ENCODE measurements at regions of chr6 and their contacts with region 1.

Region 1: DNA sequence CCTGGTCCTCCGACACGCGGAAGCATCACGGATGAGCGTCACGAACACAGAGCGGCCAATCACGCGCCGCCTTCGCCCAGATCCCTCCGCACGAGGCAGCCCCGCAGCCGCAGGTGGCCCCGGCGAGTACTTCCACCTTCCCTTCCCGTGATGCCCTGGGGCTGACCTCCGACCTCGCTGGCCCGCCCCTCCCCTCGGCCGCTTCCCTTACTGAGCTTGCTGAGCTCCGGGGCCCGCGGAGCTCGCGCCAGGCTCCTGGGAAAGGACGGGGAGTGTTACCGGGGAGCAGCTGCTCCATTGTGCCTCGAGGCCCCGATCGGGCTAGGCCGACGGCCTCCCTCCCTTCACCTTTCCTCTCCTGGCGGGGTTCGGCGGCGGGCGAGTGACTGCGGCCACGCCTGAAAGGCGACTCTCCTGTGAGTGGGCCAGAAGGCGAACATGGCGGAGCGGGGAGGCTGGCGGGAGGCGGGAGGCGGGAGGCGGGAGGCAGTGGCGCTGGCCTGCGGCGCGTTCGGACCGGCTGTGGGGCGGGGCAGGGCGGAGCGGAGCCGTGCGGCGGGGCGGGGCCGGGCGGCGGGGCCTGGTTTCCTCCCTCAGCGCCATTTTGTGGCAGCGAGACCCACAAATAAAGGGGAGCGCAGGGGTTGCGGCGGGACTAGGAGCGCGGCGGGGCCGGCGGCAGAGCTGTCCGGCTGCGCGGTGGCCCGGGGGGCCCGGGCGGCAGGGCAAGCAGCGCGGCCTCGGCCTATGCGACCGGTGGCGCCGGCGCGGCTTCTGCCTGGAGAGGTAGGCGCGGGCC is at the start of gene WTAP:
- DNase-seq: peak; percentile 97
- H3K4me3 Mint-ChIP-seq: peak within 1 kb of the TSS; percentile 96
- H3K27ac Mint-ChIP-seq: peak within 1 kb of the TSS; percentile 96
- H3K4me1 Mint-ChIP-seq: peaks cover 61% of the 10 kb centered on the region
- H3K27me3 Mint-ChIP-seq: no peaks in the 10 kb centered on the region
- total RNA-seq, gene WTAP: 124 TPM

Region 2: GRCh38 chr6:159693128-159693893 is 33.8 kb before region 1 on chr6 and contains the start of gene SOD2:
- CTCF ChIA-PET with region 1: interaction called, 20 read pairs
- POLR2A ChIA-PET with region 1: interaction called, 186 read pairs
- DNase-seq: peak; percentile 85
- H3K4me3 Mint-ChIP-seq: peak within 1 kb of the TSS; percentile 97
- H3K27ac Mint-ChIP-seq: peak within 1 kb of the TSS; percentile 97
- H3K4me1 Mint-ChIP-seq: peaks cover 52% of the 10 kb centered on the region
- H3K27me3 Mint-ChIP-seq: no peaks in the 10 kb centered on the region
- total RNA-seq, gene SOD2: 76.5 to 84.8 TPM

Region 3: GRCh38 chr6:159739341-159739740 is 12.2 kb after region 1 on chr6:
- CTCF ChIA-PET with region 1: interaction called, 3 read pairs
- POLR2A ChIA-PET with region 1: interaction called, 24 read pairs
- DNase-seq: no peak
- H3K4me3 Mint-ChIP-seq: no peak overlapping the region
- H3K27ac Mint-ChIP-seq: no peak overlapping the region
- H3K4me1 Mint-ChIP-seq: peaks cover 17% of the 10 kb centered on the region
- H3K27me3 Mint-ChIP-seq: no peaks in the 10 kb centered on the region

Region 4: GRCh38 chr6:159761873-159762680 is 35.0 kb after region 1 on chr6 and contains the start of gene ACAT2:
- CTCF ChIA-PET with region 1: interaction called, 8 read pairs
- POLR2A ChIA-PET with region 1: interaction called, 91 read pairs
- DNase-seq: peak; percentile 95
- H3K4me3 Mint-ChIP-seq: peak within 1 kb of the TSS; percentile 84
- H3K27ac Mint-ChIP-seq: peak within 1 kb of the TSS; percentile 96
- H3K4me1 Mint-ChIP-seq: peaks cover 44% of the 10 kb centered on the region
- H3K27me3 Mint-ChIP-seq: no peaks in the 10 kb centered on the region
- total RNA-seq, gene ACAT2: 98.0 to 109 TPM

Region 5: GRCh38 chr6:159979136-159979874 is 252.2 kb after region 1 on chr6:
- CTCF ChIA-PET with region 1: interaction called, 3 read pairs
- POLR2A ChIA-PET with region 1: interaction called, 11 read pairs
- DNase-seq: peak; percentile 74
- H3K4me3 Mint-ChIP-seq: peak overlapping the region; percentile 69
- H3K27ac Mint-ChIP-seq: peak overlapping the region; percentile 95
- H3K4me1 Mint-ChIP-seq: peaks cover 95% of the 10 kb centered on the region
- H3K27me3 Mint-ChIP-seq: no peaks in the 10 kb centered on the region

Region 6: DNA sequence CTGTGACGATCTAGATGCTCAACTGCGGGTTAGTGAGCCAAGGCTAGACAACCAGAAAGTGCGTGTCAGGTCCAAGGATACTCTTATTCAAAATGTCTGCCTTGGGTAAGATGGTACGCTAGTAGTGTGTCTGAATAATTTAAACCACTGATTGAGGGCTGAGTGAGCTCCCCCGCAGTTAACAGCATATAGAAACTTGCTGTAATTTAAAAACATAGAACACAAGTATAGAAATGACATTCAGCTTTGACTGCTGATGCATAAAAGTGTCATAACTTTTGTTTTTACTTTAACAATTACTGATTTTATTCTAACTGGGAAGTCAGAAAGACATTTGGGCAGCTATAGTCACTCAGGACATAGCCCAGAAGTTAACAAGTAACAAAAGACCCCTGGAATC is 348.9 kb after region 1 on chr6:
- CTCF ChIA-PET with region 1: no interaction called
- POLR2A ChIA-PET with region 1: no interaction called
- DNase-seq: no peak
- H3K4me3 Mint-ChIP-seq: no peak overlapping the region
- H3K27ac Mint-ChIP-seq: no peak overlapping the region
- H3K4me1 Mint-ChIP-seq: peaks cover 24% of the 10 kb centered on the region
- H3K27me3 Mint-ChIP-seq: no peaks in the 10 kb centered on the region

Measured in activated CD4-positive, alpha-beta memory T cell treated with anti-CD3 and anti-CD28 coated beads, Interleukin-2, amount 10 ng/mL, durations not matched to agents 7 days and 5 days (primary cell).